ENCODE measurements at regions of chr13 and their contacts with region 1.

Region 1: DNA sequence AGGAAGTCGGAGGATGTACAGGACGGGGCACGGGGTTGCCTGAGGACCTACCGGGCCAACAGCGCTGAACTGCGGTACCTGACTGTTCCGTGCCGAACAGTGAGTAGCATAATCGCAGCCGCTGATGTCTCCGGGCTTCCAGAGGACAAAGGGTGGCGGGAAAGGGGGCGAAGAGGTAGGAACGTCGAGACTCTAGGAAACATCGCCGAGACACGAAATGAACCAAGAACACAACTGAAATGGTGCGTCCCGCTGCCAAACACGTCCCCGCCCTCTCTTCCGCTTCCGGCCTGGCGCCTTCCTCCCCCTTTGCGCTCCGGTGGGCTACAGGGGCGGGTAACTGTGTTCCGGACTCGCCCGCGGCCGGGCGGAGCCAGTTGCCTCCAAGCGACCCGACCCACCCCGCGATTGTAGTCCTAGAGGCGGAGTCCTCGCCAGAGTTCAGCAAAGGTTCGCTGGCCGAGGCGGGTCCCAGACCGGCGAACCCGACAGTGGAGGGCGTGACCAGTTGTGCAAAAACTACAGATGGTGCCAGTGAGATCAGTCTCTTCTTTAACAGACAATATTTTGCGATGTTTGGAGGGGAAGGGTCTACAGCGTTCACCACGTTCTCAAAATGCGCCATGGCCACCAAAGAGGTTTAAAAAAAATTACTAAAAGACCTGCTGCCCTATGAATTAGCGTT is at the start of gene MRPS31:
- DNase-seq: peak; percentile 98
- ATAC-seq: peak; percentile 100
- H3K4me3 Mint-ChIP-seq: peak within 1 kb of the TSS; percentile 97
- H3K27ac Mint-ChIP-seq: peak within 1 kb of the TSS; percentile 96
- H3K4me1 Mint-ChIP-seq: peaks cover 37% of the 10 kb centered on the region
- H3K27me3 Mint-ChIP-seq: no peaks in the 10 kb centered on the region
- total RNA-seq, gene MRPS31: 35.0 to 37.1 TPM

Region 2: GRCh38 chr13:40789275-40790133 is 18.4 kb after region 1 on chr13 and contains the start of gene SLC25A15:
- CTCF ChIA-PET with region 1: interaction called, 44 read pairs
- DNase-seq: peak; percentile 74
- ATAC-seq: peak; percentile 90
- H3K4me3 Mint-ChIP-seq: peak within 1 kb of the TSS; percentile 73
- H3K27ac Mint-ChIP-seq: peak within 1 kb of the TSS; percentile 67
- H3K4me1 Mint-ChIP-seq: peaks cover 50% of the 10 kb centered on the region
- H3K27me3 Mint-ChIP-seq: no peaks in the 10 kb centered on the region
- total RNA-seq, gene SLC25A15: 11.2 to 14.5 TPM

Region 3: DNA sequence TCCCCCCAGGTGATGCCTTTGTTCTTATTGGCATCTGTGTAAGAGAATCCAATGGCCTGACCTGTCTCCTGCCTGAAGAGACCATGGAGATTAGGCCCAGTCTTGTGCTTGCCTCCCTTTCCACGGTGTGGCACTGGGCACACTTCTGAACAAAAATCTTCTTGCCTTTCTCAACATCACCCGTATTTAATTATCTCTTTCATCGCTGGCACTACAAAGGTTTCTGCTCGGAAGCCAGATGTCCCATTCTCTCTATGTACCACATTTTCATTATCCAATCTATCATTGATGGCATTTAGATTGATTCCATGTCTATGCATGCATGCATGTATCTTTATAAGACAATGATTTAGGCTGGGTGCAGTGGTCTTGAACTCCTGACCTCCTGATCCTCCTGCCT is 92.6 kb after region 1 on chr13:
- CTCF ChIA-PET with region 1: no interaction called
- DNase-seq: no peak
- ATAC-seq: no peak
- H3K4me3 Mint-ChIP-seq: no peak overlapping the region
- H3K27ac Mint-ChIP-seq: no peak overlapping the region
- H3K4me1 Mint-ChIP-seq: no peaks in the 10 kb centered on the region
- H3K27me3 Mint-ChIP-seq: no peaks in the 10 kb centered on the region

Measured in activated CD8-positive, alpha-beta memory T cell treated with anti-CD3 and anti-CD28 coated beads, Interleukin-2, amount 10 ng/mL, durations not matched to agents 7 days and 5 days (primary cell).